ENCODE measurements at regions of chr10 and their contacts with region 1.

Region 1: GRCh38 chr10:97584060-97584797 is at the start of gene HOGA1:
- DNase-seq: peak; percentile 47
- H3K4me3 ChIP-seq: no peak within 1 kb of the TSS
- H3K27ac ChIP-seq: no peak within 1 kb of the TSS
- H3K4me1 ChIP-seq: no peaks in the 10 kb centered on the region
- H3K27me3 ChIP-seq: no peaks in the 10 kb centered on the region
- CTCF ChIP-seq: no peak
- POLR2A ChIP-seq: no peak
- total RNA-seq, gene HOGA1: 0.46 and 0.91 TPM in 2 replicates

Region 2: GRCh38 chr10:97355571-97355975 is 228.7 kb before region 1 on chr10:
- CTCF ChIA-PET with region 1: no interaction called
- POLR2A ChIA-PET with region 1: no interaction called
- dilution Hi-C with region 1: no loop called
- intact Hi-C with region 1: no loop called
- DNase-seq: peak; percentile 80
- H3K4me3 ChIP-seq: no peak overlapping the region
- H3K27ac ChIP-seq: peak overlapping the region; percentile 36
- H3K4me1 ChIP-seq: peaks cover 13% of the 10 kb centered on the region
- H3K27me3 ChIP-seq: no peaks in the 10 kb centered on the region
- CTCF ChIP-seq: peak; percentile 39 to 45
- POLR2A ChIP-seq: no peak

Region 3: GRCh38 chr10:97596101-97597062 is 12.2 kb after region 1 on chr10:
- CTCF ChIA-PET with region 1: interaction called, 10 read pairs
- POLR2A ChIA-PET with region 1: interaction called, 4 read pairs
- dilution Hi-C with region 1: no loop called
- intact Hi-C with region 1: loop called (anchors 1 kb)
- DNase-seq: peak; percentile 98
- H3K4me3 ChIP-seq: no peak overlapping the region
- H3K27ac ChIP-seq: peak overlapping the region; percentile 82
- H3K4me1 ChIP-seq: peaks cover 25% of the 10 kb centered on the region
- H3K27me3 ChIP-seq: no peaks in the 10 kb centered on the region
- CTCF ChIP-seq: no peak
- POLR2A ChIP-seq: peak; percentile 66

Measured in endothelial cell of umbilical vein (primary cell).